Activated CD4-positive, alpha-beta memory T cell treated with anti-CD3 and anti-CD28 coated beads for 36 hours (primary cell): ENCODE measurements at regions of chr6 and their contacts with region 1.

Region 1: GRCh38 chr6:71288228-71289001 is at the start of gene OGFRL1:
- DNase-seq: peak; percentile 75
- H3K4me3 Mint-ChIP-seq: peak within 1 kb of the TSS; percentile 69
- H3K27ac Mint-ChIP-seq: peak within 1 kb of the TSS; percentile 33
- H3K4me1 Mint-ChIP-seq: peaks cover 35% of the 10 kb centered on the region
- H3K27me3 Mint-ChIP-seq: no peaks in the 10 kb centered on the region
- total RNA-seq, gene OGFRL1: 3.8 to 4.3 TPM

Region 2: DNA sequence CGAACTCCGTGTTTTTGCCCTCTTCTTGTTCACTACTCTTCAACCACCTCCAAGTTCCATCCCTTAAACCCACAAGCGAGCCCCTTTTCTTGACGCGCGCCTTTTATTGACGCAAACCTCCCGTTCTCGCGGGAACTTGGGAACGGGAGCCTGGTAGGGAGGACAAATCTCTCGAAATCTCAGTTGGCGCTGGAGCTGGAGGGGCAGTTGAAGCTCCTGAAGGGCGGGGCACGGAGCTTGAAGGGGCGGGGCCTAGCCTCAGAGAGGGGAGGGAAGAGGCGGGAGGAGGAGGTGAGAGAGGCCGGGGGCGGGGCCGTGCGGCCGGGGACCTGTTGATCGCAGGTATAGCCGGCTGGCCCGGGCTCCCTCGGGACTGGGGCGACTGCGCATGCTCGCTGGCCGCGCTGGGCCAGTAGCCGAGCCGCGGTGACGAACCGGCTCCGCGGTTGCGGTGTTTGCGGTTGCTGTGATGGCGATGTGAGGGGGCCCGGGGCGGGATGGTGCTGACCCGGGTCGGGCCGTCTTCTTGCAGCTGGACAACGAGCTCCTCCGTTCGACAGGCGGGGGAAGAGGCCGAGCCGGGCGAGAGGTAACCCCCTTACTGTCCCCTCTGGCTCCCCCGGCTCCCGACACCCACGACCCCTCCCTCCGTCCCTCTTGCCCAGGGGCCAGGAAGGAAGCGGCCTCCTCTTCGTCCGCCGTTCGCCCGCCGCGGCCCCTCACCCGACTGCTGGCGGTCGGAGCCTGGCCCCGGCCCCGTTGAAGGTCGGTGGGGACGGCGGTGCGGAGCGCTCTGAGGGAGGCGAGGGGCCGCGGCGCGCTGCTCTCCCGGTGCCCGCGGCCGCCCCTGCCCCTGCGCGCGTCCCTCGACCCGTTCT is 875.1 kb before region 1 on chr6 and contains the start of gene FAM135A:
- CTCF ChIA-PET with region 1: interaction called, 4 read pairs
- POLR2A ChIA-PET with region 1: no interaction called
- intact Hi-C with region 1: loop called (anchors 5 kb)
- DNase-seq: peak; percentile 98
- H3K4me3 Mint-ChIP-seq: peak within 1 kb of the TSS; percentile 88
- H3K27ac Mint-ChIP-seq: peak within 1 kb of the TSS; percentile 75
- H3K4me1 Mint-ChIP-seq: peaks cover 17% of the 10 kb centered on the region
- H3K27me3 Mint-ChIP-seq: no peaks in the 10 kb centered on the region
- total RNA-seq, gene FAM135A: 9.0 to 9.2 TPM

Region 3: DNA sequence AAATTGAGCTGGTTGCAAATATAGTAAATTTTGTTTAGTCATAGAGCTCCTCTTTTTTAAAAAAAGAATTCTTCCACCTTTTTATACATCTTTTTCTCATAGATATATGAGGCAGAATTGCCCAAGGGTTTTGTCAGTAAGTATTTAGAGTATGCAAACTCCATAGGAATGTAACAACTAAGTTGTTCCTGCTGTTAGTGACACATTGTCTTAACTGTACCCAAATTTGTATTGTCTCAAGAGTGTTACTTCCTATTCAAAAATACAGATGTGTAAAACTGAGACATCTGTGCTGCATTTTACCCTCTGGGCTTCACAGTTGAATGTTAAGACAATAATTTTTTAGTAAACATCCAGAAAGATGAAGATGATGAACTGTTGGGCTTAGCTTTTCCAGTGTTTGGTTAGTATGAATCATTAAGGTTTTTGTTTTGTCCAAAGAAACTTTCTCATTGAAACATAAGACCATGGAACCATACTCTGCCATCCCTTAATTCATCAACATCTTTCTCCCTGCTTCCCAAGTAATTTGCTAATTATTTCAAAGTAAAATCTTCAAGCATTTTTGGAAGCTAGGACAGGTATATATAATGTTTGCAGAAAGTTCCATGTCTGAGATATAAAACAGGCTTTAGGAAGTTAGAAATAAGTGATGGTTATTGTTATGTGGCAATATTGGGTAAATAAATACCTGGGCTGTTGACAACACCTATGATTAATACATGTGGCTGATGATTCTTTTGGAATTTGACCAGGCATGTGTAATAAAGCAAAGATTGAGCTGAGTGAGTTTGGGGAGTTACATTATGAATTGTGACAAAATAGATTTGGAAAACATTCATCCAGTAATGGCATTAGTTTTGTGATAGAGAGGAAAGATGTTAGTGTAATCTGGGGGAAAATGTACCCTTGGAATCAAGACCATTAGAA is 11.4 kb after region 1 on chr6:
- CTCF ChIA-PET with region 1: no interaction called
- POLR2A ChIA-PET with region 1: no interaction called
- intact Hi-C with region 1: loop called (anchors 1 kb)
- DNase-seq: no peak
- H3K4me3 Mint-ChIP-seq: no peak overlapping the region
- H3K27ac Mint-ChIP-seq: no peak overlapping the region
- H3K4me1 Mint-ChIP-seq: no peaks in the 10 kb centered on the region
- H3K27me3 Mint-ChIP-seq: no peaks in the 10 kb centered on the region

Region 4: DNA sequence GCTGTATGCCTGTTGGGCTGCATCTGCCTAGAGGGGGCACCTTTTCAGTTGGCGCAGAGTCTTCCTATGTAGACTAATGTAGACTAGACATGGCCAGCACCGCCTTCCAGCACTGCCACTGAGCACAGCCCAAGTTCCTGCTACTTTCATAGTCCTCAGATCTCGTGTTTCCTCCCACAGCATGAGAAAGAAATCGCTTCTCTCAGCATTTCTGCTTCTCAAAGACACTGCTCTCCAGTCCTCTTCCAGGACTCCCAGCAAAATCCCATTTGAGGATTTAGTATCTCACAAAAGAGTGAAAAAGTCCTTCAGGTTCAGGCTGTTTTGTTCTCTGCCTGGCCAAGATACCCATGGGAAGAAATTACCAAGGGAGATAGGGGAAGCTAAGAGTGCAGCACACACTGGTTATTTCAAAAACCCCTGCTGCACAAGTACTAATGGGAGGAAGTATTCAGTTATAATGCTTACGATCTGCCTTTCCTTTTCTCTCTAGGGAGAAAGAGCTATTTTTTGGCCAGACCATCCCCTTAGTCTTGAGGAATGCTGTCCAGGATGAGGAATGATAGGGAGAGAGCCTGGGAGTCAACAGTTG is 35.9 kb after region 1 on chr6:
- CTCF ChIA-PET with region 1: no interaction called
- POLR2A ChIA-PET with region 1: no interaction called
- intact Hi-C with region 1: no loop called
- DNase-seq: no peak
- H3K4me3 Mint-ChIP-seq: no peak overlapping the region
- H3K27ac Mint-ChIP-seq: no peak overlapping the region
- H3K4me1 Mint-ChIP-seq: no peaks in the 10 kb centered on the region
- H3K27me3 Mint-ChIP-seq: peaks cover 6% of the 10 kb centered on the region

Region 5: GRCh38 chr6:71349395-71349794 is 61.0 kb after region 1 on chr6:
- CTCF ChIA-PET with region 1: interaction called, 6 read pairs
- POLR2A ChIA-PET with region 1: no interaction called
- intact Hi-C with region 1: loop called (anchors 5 kb)
- DNase-seq: no peak
- H3K4me3 Mint-ChIP-seq: no peak overlapping the region
- H3K27ac Mint-ChIP-seq: no peak overlapping the region
- H3K4me1 Mint-ChIP-seq: peaks cover 4% of the 10 kb centered on the region
- H3K27me3 Mint-ChIP-seq: peaks cover 4% of the 10 kb centered on the region

Region 6: DNA sequence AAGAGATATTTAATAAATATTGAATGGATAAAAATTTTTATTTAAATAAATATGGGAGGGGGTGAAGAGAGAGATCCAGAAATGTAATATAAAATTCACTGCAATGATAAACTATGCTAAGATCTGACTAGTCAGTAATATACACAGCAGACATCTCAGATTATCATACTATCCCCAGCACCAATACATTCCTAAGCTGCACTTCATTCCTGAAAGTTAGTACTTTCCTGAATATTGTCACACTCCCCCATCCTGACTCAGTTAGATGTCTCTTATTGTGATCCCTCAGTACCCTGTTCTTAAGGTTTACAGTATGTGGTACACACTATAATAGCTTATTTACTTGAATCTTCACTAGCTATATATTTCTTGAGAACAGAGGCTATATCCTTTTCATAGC is 1245.2 kb after region 1 on chr6:
- CTCF ChIA-PET with region 1: no interaction called
- POLR2A ChIA-PET with region 1: no interaction called
- intact Hi-C with region 1: no loop called
- DNase-seq: no peak
- H3K4me3 Mint-ChIP-seq: no peak overlapping the region
- H3K27ac Mint-ChIP-seq: no peak overlapping the region
- H3K4me1 Mint-ChIP-seq: no peaks in the 10 kb centered on the region
- H3K27me3 Mint-ChIP-seq: no peaks in the 10 kb centered on the region